Right ventricle myocardium inferior (tissue), 1 donor: ENCODE measurements at regions of chr1 and their contacts with region 1.

Region 1: DNA sequence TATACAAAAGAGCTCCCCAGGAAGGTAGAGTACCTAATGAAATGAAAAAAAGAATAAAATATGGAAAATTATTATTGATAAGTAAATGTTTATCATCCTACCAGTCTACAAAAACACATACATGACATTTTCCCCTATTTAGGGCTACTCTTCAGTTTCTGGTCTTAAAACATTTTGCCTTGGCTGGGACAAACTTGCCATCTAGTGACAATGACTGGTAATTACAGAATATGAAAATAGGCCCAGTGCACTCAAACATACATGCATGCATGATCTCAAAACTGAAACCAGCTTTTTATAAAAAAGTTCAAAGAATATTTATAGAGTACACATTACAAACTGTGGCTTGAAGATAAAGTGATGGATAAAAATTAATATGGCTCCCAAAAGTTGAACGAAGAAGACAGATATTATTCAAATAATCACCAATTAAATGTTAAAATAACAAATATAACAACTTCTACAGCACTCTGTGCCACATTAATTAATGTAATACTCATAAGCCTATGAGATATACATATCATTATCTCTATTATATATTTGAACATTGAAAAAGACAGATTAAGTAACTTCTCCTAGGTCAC is 10.5 kb upstream of the RNPC3 start:
- DNase-seq: no peak
- ATAC-seq: no peak

Region 2: DNA sequence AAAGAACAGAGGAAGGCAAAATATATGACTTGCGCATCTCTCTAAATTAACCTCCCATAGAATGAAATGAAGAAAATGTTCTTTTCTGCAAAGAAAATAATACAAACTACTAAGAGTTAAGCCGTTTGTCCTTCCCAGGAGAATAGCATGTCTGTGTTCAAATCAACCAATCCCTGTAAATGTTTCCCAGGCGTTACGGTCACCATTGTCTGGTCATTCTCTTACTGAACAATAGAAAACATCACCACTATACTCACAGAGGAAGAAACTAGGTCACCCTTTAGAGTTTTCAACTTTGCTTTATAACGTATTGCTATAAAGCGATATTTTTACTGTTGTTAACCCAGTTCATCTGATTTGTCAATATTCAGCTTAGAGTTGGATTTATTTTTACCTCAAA is 440.8 kb before region 1 on chr1:
- intact Hi-C with region 1: no loop called
- DNase-seq: no peak
- ATAC-seq: no peak

Region 3: GRCh38 chr1:103106426-103107341 is 408.3 kb before region 1 on chr1:
- intact Hi-C with region 1: loop called (anchors 10 kb)
- DNase-seq: no peak
- ATAC-seq: peak; percentile 70

Region 4: GRCh38 chr1:103496014-103496635 is 18.9 kb before region 1 on chr1:
- intact Hi-C with region 1: no loop called
- DNase-seq: no peak
- ATAC-seq: no peak